ENCODE measurements at regions of chr10 and their contacts with region 1.

Region 1: GRCh38 chr10:75019370-75019769 is 92.1 kb upstream of the SAMD8 start:
- DNase-seq: peak in 1 of 2 donors; percentile 67
- ATAC-seq: peak; percentile 32 to 50 (median 46)
- H3K4me3 ChIP-seq: no peak overlapping the region
- H3K4me3 Mint-ChIP-seq: peak overlapping the region; percentile 74
- H3K27ac ChIP-seq: no peak overlapping the region
- H3K27ac Mint-ChIP-seq: peak overlapping the region; percentile 82 to 94
- H3K4me1 ChIP-seq: peaks cover 31% of the 10 kb centered on the region
- H3K4me1 Mint-ChIP-seq: peaks cover 51 to 70% of the 10 kb centered on the region in 2 donors
- H3K27me3 ChIP-seq: no peaks in the 10 kb centered on the region
- H3K27me3 Mint-ChIP-seq: no peaks in the 10 kb centered on the region
- CTCF ChIP-seq: peak; percentile 61

Region 2: DNA sequence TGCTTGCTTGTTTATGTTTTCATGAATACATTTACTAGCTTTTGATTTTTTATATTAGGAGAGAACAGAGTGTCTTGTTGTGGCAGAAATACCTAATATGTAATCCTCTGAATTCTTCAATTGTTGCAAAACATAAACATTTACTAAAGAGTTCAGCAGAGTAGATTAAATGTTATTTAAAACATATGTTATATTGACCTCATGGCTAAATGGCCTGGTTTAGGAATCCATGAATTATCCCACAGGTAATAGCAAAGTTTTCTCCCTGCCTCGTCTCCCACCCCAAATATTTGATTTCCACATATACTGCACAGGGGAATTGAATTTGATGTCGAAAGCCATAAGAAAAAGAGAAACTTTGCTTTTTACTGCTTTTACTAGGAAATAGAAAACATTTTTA is 756.5 kb before region 1 on chr10:
- intact Hi-C with region 1: loop called (anchors 1 kb)
- DNase-seq: no peak
- ATAC-seq: no peak
- H3K4me3 ChIP-seq: no peak overlapping the region
- H3K4me3 Mint-ChIP-seq: no peak overlapping the region
- H3K27ac ChIP-seq: no peak overlapping the region
- H3K27ac Mint-ChIP-seq: no peak overlapping the region
- H3K4me1 ChIP-seq: peaks cover 4% of the 10 kb centered on the region
- H3K4me1 Mint-ChIP-seq: peaks cover 0 to 8% of the 10 kb centered on the region in 2 donors
- H3K27me3 ChIP-seq: no peaks in the 10 kb centered on the region
- H3K27me3 Mint-ChIP-seq: no peaks in the 10 kb centered on the region
- CTCF ChIP-seq: no peak

Region 3: GRCh38 chr10:74738985-74739567 is 280.3 kb before region 1 on chr10:
- intact Hi-C with region 1: loop called (anchors 1 kb)
- DNase-seq: peak; percentile 29 to 62
- ATAC-seq: peak; percentile 77 to 85 (median 83)
- H3K4me3 ChIP-seq: peak overlapping the region; percentile 32
- H3K4me3 Mint-ChIP-seq: peak overlapping the region; percentile 82
- H3K27ac ChIP-seq: peak overlapping the region; percentile 88
- H3K27ac Mint-ChIP-seq: peak overlapping the region; percentile 92 to 95
- H3K4me1 ChIP-seq: peaks cover 31% of the 10 kb centered on the region
- H3K4me1 Mint-ChIP-seq: peaks cover 30 to 34% of the 10 kb centered on the region in 2 donors
- H3K27me3 ChIP-seq: no peaks in the 10 kb centered on the region
- H3K27me3 Mint-ChIP-seq: no peaks in the 10 kb centered on the region
- CTCF ChIP-seq: peak; percentile 30

Region 4: DNA sequence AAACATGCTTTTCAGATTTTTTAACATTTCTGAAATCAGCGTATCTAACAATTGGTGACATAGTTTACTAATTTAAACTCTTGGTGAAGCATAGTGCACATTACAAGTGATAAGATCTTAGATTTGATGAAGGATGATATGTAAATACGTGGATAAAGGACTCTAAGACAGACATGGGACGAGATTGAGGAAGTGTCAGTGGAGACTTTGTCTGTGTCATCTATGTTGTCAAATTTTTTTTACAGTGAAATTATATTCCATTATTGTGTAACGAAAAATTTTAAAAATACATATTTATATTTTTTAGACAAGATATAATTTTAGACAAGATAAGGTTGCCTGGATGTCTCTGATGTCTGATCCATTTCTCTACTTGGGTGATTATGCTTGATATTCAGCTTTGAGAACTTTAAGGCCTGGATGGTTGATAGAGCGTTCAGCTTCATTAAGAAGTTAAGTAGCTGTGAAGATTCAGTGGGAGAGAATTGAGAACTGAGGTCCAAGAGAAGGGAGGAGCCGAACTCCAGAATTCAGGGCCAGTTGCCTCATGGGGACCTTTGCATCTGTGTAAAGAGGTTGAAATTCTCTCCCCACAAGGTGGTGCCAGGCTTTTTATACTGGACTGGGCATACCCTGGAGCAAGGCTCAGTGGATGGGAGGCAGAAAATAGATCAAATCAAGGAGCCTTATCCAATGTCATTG is 130.3 kb before region 1 on chr10:
- intact Hi-C with region 1: loop called (anchors 1 kb)
- DNase-seq: peak in 1 of 2 donors; percentile 20
- ATAC-seq: peak in 2 of 3 donors; percentile 48 to 59
- H3K4me3 ChIP-seq: no peak overlapping the region
- H3K4me3 Mint-ChIP-seq: no peak overlapping the region
- H3K27ac ChIP-seq: no peak overlapping the region
- H3K27ac Mint-ChIP-seq: peak overlapping the region; percentile 37 to 83
- H3K4me1 ChIP-seq: peaks cover 11% of the 10 kb centered on the region
- H3K4me1 Mint-ChIP-seq: peaks cover 43 to 66% of the 10 kb centered on the region in 2 donors
- H3K27me3 ChIP-seq: no peaks in the 10 kb centered on the region
- H3K27me3 Mint-ChIP-seq: no peaks in the 10 kb centered on the region
- CTCF ChIP-seq: no peak

Region 5: GRCh38 chr10:74924251-74924951 is 95.0 kb before region 1 on chr10:
- intact Hi-C with region 1: loop called (anchors 5 kb)
- DNase-seq: no peak
- ATAC-seq: no peak
- H3K4me3 ChIP-seq: no peak overlapping the region
- H3K4me3 Mint-ChIP-seq: no peak overlapping the region
- H3K27ac ChIP-seq: no peak overlapping the region
- H3K27ac Mint-ChIP-seq: peak overlapping the region; percentile 74 to 76
- H3K4me1 ChIP-seq: peaks cover 8% of the 10 kb centered on the region
- H3K4me1 Mint-ChIP-seq: peaks cover 46 to 61% of the 10 kb centered on the region in 2 donors
- H3K27me3 ChIP-seq: no peaks in the 10 kb centered on the region
- H3K27me3 Mint-ChIP-seq: no peaks in the 10 kb centered on the region
- CTCF ChIP-seq: no peak

Region 6: DNA sequence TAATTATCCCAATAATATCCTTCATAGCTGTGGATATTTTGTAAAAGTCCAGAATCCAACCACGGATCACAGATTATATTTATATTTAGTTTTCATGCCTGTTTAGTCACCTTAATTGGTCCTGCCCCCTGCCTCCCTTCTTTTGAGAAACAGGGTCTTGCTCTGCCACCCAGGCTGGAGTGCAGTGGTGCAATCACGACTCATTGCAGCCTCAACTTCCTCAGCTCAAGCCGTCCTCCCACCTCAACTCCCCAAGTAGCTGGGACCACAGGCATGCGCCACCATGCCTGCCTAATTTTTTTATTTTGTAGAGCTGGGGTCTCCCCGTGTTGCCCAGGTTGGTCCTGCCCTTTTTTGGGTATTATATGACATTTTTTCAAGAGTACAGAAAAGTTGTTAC is 63.6 kb before region 1 on chr10:
- intact Hi-C with region 1: no loop called
- DNase-seq: no peak
- ATAC-seq: no peak
- H3K4me3 ChIP-seq: no peak overlapping the region
- H3K4me3 Mint-ChIP-seq: no peak overlapping the region
- H3K27ac ChIP-seq: no peak overlapping the region
- H3K27ac Mint-ChIP-seq: no peak overlapping the region
- H3K4me1 ChIP-seq: no peaks in the 10 kb centered on the region
- H3K4me1 Mint-ChIP-seq: peaks cover 37 to 48% of the 10 kb centered on the region in 2 donors
- H3K27me3 ChIP-seq: no peaks in the 10 kb centered on the region
- H3K27me3 Mint-ChIP-seq: no peaks in the 10 kb centered on the region
- CTCF ChIP-seq: no peak

Region 7: GRCh38 chr10:75000748-75001321 is 18.5 kb before region 1 on chr10:
- intact Hi-C with region 1: loop called (anchors 1 kb)
- DNase-seq: no peak
- ATAC-seq: peak; percentile 31 to 87 (median 68)
- H3K4me3 ChIP-seq: no peak overlapping the region
- H3K4me3 Mint-ChIP-seq: peak overlapping the region; percentile 42
- H3K27ac ChIP-seq: peak overlapping the region; percentile 57
- H3K27ac Mint-ChIP-seq: peak overlapping the region; percentile 75 to 92
- H3K4me1 ChIP-seq: peaks cover 6% of the 10 kb centered on the region
- H3K4me1 Mint-ChIP-seq: peaks cover 24 to 36% of the 10 kb centered on the region in 2 donors
- H3K27me3 ChIP-seq: no peaks in the 10 kb centered on the region
- H3K27me3 Mint-ChIP-seq: no peaks in the 10 kb centered on the region
- CTCF ChIP-seq: no peak

Region 8: DNA sequence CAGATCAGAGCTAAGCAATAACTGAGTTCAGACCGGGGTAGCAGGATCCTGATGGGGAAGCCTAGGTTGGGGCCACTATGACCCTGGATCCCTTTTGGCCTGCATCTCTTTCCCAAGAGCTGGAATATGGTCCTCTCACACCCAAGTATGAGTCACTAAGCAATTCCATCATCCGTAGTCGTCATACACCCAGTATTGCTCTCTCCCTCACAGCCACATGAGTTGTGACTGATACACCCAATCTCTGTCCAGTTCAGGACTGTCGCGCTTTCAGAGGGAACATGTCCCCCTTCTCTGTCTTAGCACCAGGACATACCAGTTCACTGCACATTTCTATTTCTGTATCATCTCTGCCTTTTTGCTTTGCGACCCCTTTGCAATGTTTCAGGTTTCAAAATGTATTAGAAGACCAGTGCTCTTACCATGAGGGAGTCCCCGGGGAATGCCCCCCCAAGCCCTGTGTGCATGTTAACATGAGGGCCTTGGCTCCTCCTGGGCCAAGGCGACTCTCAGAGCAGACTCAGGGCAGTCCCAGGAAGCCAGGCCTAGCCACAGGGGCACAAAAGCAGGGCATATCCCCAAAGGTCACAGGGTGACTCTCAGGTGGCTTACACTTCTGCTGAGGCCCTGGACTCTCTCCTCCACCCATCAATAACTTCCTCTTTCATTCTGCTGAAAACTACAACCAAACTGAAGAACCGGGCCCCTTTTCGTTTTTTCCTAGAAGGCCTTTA is 16.8 kb after region 1 on chr10:
- intact Hi-C with region 1: no loop called
- DNase-seq: no peak
- ATAC-seq: no peak
- H3K4me3 ChIP-seq: no peak overlapping the region
- H3K4me3 Mint-ChIP-seq: no peak overlapping the region
- H3K27ac ChIP-seq: no peak overlapping the region
- H3K27ac Mint-ChIP-seq: peak overlapping the region in 1 of 2 donors; percentile 44
- H3K4me1 ChIP-seq: no peaks in the 10 kb centered on the region
- H3K4me1 Mint-ChIP-seq: peaks cover 17 to 22% of the 10 kb centered on the region in 2 donors
- H3K27me3 ChIP-seq: no peaks in the 10 kb centered on the region
- H3K27me3 Mint-ChIP-seq: no peaks in the 10 kb centered on the region
- CTCF ChIP-seq: no peak

Measured in natural killer cell (primary cell).